Breast epithelium (tissue), 4 donors: ENCODE measurements at regions of chr13 and their contacts with region 1.

Region 1: GRCh38 chr13:69720278-69720983 is 387.2 kb upstream of the ATXN8OS start:
- DNase-seq: no peak
- H3K4me3 ChIP-seq: no peak overlapping the region
- H3K27ac ChIP-seq: no peak overlapping the region
- H3K4me1 ChIP-seq: no peaks in the 10 kb centered on the region
- H3K27me3 ChIP-seq: no peaks in the 10 kb centered on the region
- CTCF ChIP-seq: no peak
- POLR2A ChIP-seq: no peak

Region 2: GRCh38 chr13:69737129-69737935 is 16.9 kb after region 1 on chr13:
- intact Hi-C with region 1: no loop called
- DNase-seq: no peak
- H3K4me3 ChIP-seq: no peak overlapping the region
- H3K27ac ChIP-seq: no peak overlapping the region
- H3K4me1 ChIP-seq: no peaks in the 10 kb centered on the region
- H3K27me3 ChIP-seq: no peaks in the 10 kb centered on the region
- CTCF ChIP-seq: no peak
- POLR2A ChIP-seq: no peak

Region 3: DNA sequence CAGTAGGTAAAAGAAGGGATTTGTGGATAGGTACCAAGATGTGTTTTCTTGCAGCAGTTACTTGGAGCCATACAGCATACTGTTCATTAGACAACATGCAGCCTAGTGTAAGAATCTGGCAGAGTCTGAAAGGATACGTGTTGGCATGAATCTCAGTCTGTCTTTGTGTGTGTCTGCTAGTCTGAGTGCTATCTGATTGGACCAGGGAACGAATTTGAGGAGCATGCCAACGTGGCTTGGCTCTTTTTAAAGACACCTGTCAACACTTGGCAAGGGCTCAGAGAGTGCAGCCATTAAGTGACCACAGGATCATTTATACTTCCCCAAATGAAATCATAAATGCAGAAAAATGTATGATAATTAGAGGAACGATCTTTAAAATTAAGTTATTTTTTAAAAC is 359.6 kb after region 1 on chr13:
- intact Hi-C with region 1: loop called (anchors 5 kb)
- DNase-seq: no peak
- H3K4me3 ChIP-seq: no peak overlapping the region
- H3K27ac ChIP-seq: no peak overlapping the region
- H3K4me1 ChIP-seq: no peaks in the 10 kb centered on the region
- H3K27me3 ChIP-seq: no peaks in the 10 kb centered on the region
- CTCF ChIP-seq: no peak
- POLR2A ChIP-seq: no peak